Transverse colon (tissue), 4 donors: ENCODE measurements at regions of chr21 and their contacts with region 1.

Region 1: GRCh38 chr21:33915368-33916199 is at the start of gene ATP5PO:
- DNase-seq: peak; percentile 98
- H3K4me3 ChIP-seq: peak within 1 kb of the TSS; percentile 62 to 88 (median 81)
- H3K27ac ChIP-seq: peak within 1 kb of the TSS; percentile 80 to 90 (median 88)
- H3K4me1 ChIP-seq: peaks cover 0 to 24% (median 18%) of the 10 kb centered on the region in 4 donors
- H3K27me3 ChIP-seq: no peaks in the 10 kb centered on the region
- CTCF ChIP-seq: peak in 2 of 5 experiments; percentile 26 to 30
- EP300 ChIP-seq: no peak
- POLR2A ChIP-seq: peak; percentile 94
- total RNA-seq, gene ATP5PO: 65.1 to 375 (median 193) TPM

Region 2: DNA sequence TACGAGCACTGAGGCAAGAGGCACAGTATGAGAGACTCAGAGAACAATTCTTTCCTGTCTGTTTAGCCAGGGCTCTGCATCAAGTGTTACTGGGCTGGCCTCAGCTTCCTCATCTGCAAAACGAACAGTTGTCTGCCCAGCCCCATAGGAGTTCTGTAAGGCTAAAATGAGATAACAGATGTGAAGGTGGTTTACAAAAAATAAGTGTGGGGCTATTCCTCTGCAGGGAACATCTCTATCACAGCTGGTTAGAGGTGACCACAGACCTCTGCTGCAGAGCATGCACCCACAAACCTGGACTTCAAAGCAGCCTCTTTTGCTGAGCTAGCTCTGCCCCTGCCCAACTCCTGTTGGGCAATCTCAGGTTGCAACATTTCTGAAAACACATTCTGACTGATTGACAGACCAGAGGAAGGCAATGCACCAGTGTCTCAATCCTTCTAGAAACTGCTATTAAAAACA is 856.2 kb before region 1 on chr21:
- in situ Hi-C with region 1: no loop called
- intact Hi-C with region 1: no loop called
- DNase-seq: no peak
- H3K4me3 ChIP-seq: no peak overlapping the region
- H3K27ac ChIP-seq: no peak overlapping the region
- H3K4me1 ChIP-seq: no peaks in the 10 kb centered on the region
- H3K27me3 ChIP-seq: peaks cover 23% of the 10 kb centered on the region
- CTCF ChIP-seq: no peak
- EP300 ChIP-seq: no peak
- POLR2A ChIP-seq: no peak

Region 3: GRCh38 chr21:33984021-33984481 is 68.5 kb after region 1 on chr21:
- in situ Hi-C with region 1: no loop called
- intact Hi-C with region 1: no loop called
- DNase-seq: no peak
- H3K4me3 ChIP-seq: no peak overlapping the region
- H3K27ac ChIP-seq: no peak overlapping the region
- H3K4me1 ChIP-seq: peaks cover 0 to 5% (median under 1%) of the 10 kb centered on the region in 4 donors
- H3K27me3 ChIP-seq: peaks cover 5% of the 10 kb centered on the region
- CTCF ChIP-seq: no peak
- EP300 ChIP-seq: no peak
- POLR2A ChIP-seq: no peak

Region 4: DNA sequence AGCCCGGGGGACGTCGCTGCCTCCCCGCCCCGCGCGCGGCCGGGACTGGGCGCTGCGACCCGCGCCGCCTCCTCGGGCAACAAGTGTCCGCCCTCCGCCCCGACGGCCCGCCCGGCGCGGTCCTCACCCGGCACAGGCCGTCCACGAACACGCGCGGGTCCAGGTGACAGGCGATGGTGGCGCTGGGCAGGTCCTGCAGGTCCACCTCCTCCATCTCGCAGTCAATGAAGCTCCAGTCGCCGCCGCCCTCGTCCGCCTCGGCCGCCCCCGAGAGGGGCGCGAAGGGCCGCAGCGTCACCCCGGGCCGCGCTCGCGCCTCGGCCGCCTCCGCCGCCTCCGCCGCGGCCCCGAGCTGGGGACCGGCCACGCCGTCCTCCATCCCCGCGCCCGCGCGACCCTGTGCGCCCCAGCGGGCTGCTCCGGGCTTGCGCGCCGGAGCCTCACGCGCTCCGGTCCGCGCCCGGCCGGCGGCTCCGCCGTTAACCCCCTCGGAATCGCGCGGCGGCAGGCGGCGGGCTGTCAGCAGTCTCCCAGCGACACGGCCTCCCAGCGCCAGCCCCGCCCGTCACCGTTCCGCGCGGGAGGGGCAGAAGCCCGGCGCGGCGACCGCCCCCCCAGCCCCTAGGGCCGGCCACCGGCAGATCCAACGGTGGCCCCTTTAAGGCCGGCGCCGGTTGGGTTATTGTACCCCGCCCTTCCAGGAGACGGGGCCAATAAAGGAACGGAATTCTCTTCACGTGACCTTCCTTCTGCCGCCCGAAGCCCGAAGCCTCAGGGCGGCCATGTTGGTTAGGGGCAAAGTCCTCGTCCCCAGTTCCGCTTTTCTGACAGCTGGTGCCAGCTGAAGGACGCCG is 699.3 kb after region 1 on chr21 and contains the start of gene RCAN1:
- in situ Hi-C with region 1: loop called in 3 of 4 experiments (anchors 25 kb)
- intact Hi-C with region 1: no loop called
- DNase-seq: peak; percentile 93
- H3K4me3 ChIP-seq: peak within 1 kb of the TSS; percentile 59 to 93 (median 70)
- H3K27ac ChIP-seq: peak within 1 kb of the TSS; percentile 83 to 91 (median 86)
- H3K4me1 ChIP-seq: peaks cover 0 to 22% (median 15%) of the 10 kb centered on the region in 4 donors
- H3K27me3 ChIP-seq: no peaks in the 10 kb centered on the region
- CTCF ChIP-seq: no peak
- EP300 ChIP-seq: no peak
- POLR2A ChIP-seq: no peak
- total RNA-seq, gene RCAN1: 39.5 to 68.8 (median 57.8) TPM

Region 5: GRCh38 chr21:34630536-34631143 is 715.1 kb after region 1 on chr21:
- in situ Hi-C with region 1: loop called in 1 of 4 experiments (anchors 25 kb)
- intact Hi-C with region 1: no loop called
- DNase-seq: no peak
- H3K4me3 ChIP-seq: no peak overlapping the region
- H3K27ac ChIP-seq: no peak overlapping the region
- H3K4me1 ChIP-seq: no peaks in the 10 kb centered on the region
- H3K27me3 ChIP-seq: no peaks in the 10 kb centered on the region
- CTCF ChIP-seq: peak; percentile 79 to 86 (median 80)
- EP300 ChIP-seq: no peak
- POLR2A ChIP-seq: no peak

Region 6: GRCh38 chr21:35026617-35027562 is 1111.3 kb after region 1 on chr21:
- in situ Hi-C with region 1: no loop called
- intact Hi-C with region 1: no loop called
- DNase-seq: peak; percentile 71
- H3K4me3 ChIP-seq: peak overlapping the region in 3 of 4 donors; percentile 5 to 24 (median 11)
- H3K27ac ChIP-seq: peak overlapping the region; percentile 9 to 72 (median 50)
- H3K4me1 ChIP-seq: peaks cover 3 to 35% (median 25%) of the 10 kb centered on the region in 4 donors
- H3K27me3 ChIP-seq: no peaks in the 10 kb centered on the region
- CTCF ChIP-seq: no peak
- EP300 ChIP-seq: no peak
- POLR2A ChIP-seq: no peak